Activated CD8-positive, alpha-beta T cell treated with anti-CD3 and anti-CD28 coated beads for 36 hours (primary cell): ENCODE measurements at regions of chr12 and their contacts with region 1.

Region 1: DNA sequence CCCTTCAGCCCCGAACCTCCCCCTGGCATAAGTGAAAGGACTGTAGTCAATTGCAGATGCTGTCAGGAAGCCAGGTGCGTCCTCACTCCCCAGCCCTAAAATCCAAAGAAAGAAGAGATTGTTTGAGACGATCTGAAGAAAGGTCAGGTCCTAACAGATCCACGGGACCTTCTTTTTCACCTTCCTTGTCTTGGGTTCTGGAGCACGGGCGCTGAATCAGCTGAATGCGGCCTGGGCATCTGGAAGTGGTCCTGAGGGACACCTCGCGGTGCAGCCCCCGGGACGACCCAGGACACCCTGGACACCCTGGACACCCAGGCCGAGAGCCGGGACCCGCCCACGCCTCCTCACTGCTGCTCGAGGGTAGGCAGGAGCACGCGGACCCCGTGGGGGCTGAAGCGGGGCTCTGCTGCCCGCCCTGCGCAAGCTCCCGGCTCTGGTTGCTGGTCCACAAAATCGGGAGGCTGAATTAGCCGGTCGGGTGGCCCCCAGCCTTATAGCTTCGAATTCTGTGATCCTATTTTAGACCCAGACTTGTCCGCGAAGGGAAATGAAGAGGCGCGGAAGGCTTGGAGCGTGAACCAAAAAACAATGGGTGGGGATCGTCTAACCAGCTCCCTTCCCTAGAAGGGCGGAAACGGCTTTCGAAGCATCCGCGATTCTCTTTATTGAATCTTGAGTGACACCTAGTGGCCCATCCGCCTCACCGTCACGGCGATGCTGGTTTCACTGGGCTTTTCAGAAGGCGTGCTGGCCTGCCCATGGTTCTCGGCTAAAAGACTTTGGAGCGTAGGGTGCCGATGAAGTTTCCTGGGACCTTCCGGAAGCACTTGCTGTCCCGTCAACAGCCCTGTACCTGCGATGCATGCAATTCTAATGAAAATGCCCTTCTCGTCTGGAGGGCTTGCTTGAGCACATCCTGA is 46.4 kb upstream of the PLXNC1 start:
- DNase-seq: peak; percentile 93
- ATAC-seq: peak; percentile 81
- H3K4me3 Mint-ChIP-seq: peak overlapping the region; percentile 77
- H3K27ac Mint-ChIP-seq: peak overlapping the region; percentile 75
- H3K4me1 Mint-ChIP-seq: peaks cover 18% of the 10 kb centered on the region
- H3K27me3 Mint-ChIP-seq: peaks cover 15% of the 10 kb centered on the region
- CTCF ChIP-seq: peak; percentile 72

Region 2: GRCh38 chr12:93467351-93468007 is 634.5 kb before region 1 on chr12 and contains the start of gene MRPL42:
- CTCF ChIA-PET with region 1: interaction called, 17 read pairs
- POLR2A ChIA-PET with region 1: interaction called, 4 read pairs
- intact Hi-C with region 1: no loop called
- DNase-seq: peak; percentile 93
- ATAC-seq: peak; percentile 93
- H3K4me3 Mint-ChIP-seq: peak within 1 kb of the TSS; percentile 84
- H3K27ac Mint-ChIP-seq: peak within 1 kb of the TSS; percentile 87
- H3K4me1 Mint-ChIP-seq: peaks cover 25% of the 10 kb centered on the region
- H3K27me3 Mint-ChIP-seq: no peaks in the 10 kb centered on the region
- CTCF ChIP-seq: peak; percentile 68
- total RNA-seq, gene MRPL42: 85.6 to 87.6 TPM

Region 3: GRCh38 chr12:93536766-93537488 is 565.1 kb before region 1 on chr12:
- CTCF ChIA-PET with region 1: interaction called, 10 read pairs
- POLR2A ChIA-PET with region 1: no interaction called
- intact Hi-C with region 1: no loop called
- DNase-seq: no peak
- ATAC-seq: peak; percentile 34
- H3K4me3 Mint-ChIP-seq: no peak overlapping the region
- H3K27ac Mint-ChIP-seq: no peak overlapping the region
- H3K4me1 Mint-ChIP-seq: peaks cover 3% of the 10 kb centered on the region
- H3K27me3 Mint-ChIP-seq: no peaks in the 10 kb centered on the region
- CTCF ChIP-seq: no peak

Region 4: GRCh38 chr12:93742110-93742934 is 359.7 kb before region 1 on chr12:
- CTCF ChIA-PET with region 1: interaction called, 33 read pairs
- POLR2A ChIA-PET with region 1: interaction called, 3 read pairs
- intact Hi-C with region 1: no loop called
- DNase-seq: peak; percentile 87
- ATAC-seq: peak; percentile 94
- H3K4me3 Mint-ChIP-seq: peak overlapping the region; percentile 80
- H3K27ac Mint-ChIP-seq: peak overlapping the region; percentile 95
- H3K4me1 Mint-ChIP-seq: peaks cover 36% of the 10 kb centered on the region
- H3K27me3 Mint-ChIP-seq: no peaks in the 10 kb centered on the region
- CTCF ChIP-seq: no peak

Region 5: DNA sequence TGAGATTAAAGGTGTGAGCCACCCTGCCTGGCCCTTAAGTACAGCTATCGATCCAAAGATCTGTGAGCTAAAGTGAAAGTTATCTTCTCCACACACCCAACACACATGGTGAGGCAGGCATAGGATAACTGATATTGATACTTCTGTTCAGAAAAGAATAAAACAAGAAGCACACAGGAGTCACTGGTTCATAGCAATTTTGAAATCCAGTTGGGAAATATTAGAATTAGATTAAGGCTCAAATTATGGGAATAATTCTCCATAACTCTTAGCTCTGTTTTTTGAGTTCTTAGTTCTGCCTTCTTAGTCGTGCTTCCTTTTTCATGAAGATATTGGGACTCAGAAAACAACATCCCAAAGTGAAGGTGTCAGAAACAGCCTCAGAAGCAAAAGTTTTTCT is 139.7 kb before region 1 on chr12:
- CTCF ChIA-PET with region 1: interaction called, 14 read pairs
- POLR2A ChIA-PET with region 1: no interaction called
- intact Hi-C with region 1: no loop called
- DNase-seq: no peak
- ATAC-seq: no peak
- H3K4me3 Mint-ChIP-seq: no peak overlapping the region
- H3K27ac Mint-ChIP-seq: no peak overlapping the region
- H3K4me1 Mint-ChIP-seq: no peaks in the 10 kb centered on the region
- H3K27me3 Mint-ChIP-seq: no peaks in the 10 kb centered on the region
- CTCF ChIP-seq: no peak

Region 6: GRCh38 chr12:94047741-94048567 is 54.0 kb before region 1 on chr12:
- CTCF ChIA-PET with region 1: interaction called, 21 read pairs
- POLR2A ChIA-PET with region 1: no interaction called
- intact Hi-C with region 1: no loop called
- DNase-seq: no peak
- ATAC-seq: no peak
- H3K4me3 Mint-ChIP-seq: no peak overlapping the region
- H3K27ac Mint-ChIP-seq: no peak overlapping the region
- H3K4me1 Mint-ChIP-seq: no peaks in the 10 kb centered on the region
- H3K27me3 Mint-ChIP-seq: no peaks in the 10 kb centered on the region
- CTCF ChIP-seq: no peak

Region 7: GRCh38 chr12:94133964-94134795 is 32.2 kb after region 1 on chr12:
- CTCF ChIA-PET with region 1: interaction called, 11 read pairs
- POLR2A ChIA-PET with region 1: no interaction called
- intact Hi-C with region 1: no loop called
- DNase-seq: peak; percentile 53
- ATAC-seq: peak; percentile 96
- H3K4me3 Mint-ChIP-seq: no peak overlapping the region
- H3K27ac Mint-ChIP-seq: no peak overlapping the region
- H3K4me1 Mint-ChIP-seq: peaks cover 2% of the 10 kb centered on the region
- H3K27me3 Mint-ChIP-seq: no peaks in the 10 kb centered on the region
- CTCF ChIP-seq: peak; percentile 82

Region 8: GRCh38 chr12:94186278-94187241 is 84.6 kb after region 1 on chr12:
- CTCF ChIA-PET with region 1: no interaction called
- POLR2A ChIA-PET with region 1: no interaction called
- intact Hi-C with region 1: no loop called
- DNase-seq: no peak
- ATAC-seq: no peak
- H3K4me3 Mint-ChIP-seq: no peak overlapping the region
- H3K27ac Mint-ChIP-seq: no peak overlapping the region
- H3K4me1 Mint-ChIP-seq: peaks cover 6% of the 10 kb centered on the region
- H3K27me3 Mint-ChIP-seq: no peaks in the 10 kb centered on the region
- CTCF ChIP-seq: no peak